ENCODE measurements at regions of chr16 and their contacts with region 1.

Region 1: DNA sequence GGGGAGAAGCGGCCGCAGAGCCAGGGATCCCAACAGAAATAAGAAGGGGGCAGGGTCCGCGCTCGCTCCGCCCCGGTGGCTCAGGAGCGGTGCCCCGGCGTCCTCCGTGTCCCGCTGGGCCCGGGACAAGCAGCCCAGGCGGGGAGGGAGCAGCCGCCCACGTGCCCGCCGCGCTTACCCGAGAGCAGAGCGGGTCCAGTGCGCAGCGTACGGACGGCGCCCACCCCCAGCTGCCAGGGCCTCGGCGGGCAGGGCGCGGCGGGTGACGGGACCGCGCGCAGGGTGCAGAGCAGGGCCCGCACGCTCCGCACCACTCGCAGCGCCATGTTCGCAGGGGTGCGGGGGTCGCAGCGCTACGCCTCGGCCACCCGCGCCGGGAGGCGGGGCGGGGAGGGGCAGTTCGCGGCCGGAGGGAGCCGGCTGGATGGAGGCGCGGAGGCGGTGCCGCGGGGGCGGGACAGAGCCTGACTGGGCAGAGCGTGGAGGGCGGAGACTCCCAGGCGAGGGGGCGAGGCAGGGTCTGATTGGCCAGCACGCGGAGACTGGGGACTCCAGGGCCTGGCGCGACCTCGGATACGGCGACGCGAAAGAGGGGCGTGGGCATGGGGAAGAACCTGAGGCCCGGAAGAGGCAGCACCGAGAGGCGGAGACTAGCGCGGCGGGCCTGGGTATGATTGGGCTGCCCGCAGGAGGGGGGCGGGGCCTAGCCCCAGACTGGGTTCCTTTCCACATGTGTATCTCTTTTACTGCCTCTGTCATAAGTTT is at the start of gene GCSH:
- DNase-seq: peak; percentile 99 to 100
- H3K4me3 ChIP-seq: peak within 1 kb of the TSS; percentile 69 to 94
- H3K27ac ChIP-seq: peak within 1 kb of the TSS; percentile 82 to 84
- H3K4me1 ChIP-seq: peaks cover 0 to 13% (median 3%) of the 10 kb centered on the region in 4 donors
- H3K27me3 ChIP-seq: no peaks in the 10 kb centered on the region
- CTCF ChIP-seq: no peak

Region 2: DNA sequence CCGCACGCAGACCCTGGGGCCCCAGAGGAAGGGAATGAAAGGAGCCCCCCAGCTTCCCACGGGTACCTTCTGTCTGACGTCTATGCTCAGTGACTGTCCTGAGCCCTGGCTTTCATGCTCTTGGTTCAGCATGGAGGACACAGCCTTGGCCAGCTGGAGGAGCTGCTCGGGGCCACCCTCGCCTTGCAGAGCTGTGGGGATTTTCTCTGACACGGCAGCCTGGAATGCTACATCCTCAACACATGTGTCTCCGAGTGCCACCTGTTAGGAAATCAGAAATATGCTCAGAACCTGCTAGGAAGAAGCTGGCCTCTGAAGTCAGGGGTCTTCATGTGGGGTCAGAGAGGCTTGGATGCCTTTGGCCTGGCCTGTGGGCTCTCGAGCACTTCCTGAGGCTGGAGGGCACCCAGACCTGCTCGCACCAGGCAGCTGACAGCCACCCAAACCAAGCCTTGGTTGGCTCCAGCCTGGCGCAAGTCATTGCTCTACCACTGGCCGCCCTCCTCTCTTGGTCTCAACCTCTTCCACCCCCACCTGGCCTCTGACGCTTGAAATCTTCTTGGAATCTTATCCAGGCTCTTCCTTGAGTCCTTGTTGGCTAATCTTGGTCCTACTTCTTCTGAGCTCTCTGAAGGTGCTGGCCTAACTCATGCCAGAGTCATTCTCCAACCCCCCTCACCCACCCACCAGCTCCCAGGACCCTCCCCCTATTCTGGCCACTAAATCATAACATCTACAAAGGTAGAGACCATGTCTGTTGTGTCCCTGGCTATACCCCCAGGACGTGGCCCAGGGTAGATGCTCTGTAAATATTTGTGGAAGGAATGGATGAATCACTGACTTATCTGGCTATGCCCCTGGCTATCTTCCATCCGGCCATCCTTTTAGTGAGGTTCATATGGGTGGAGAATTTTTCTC is 78.8 kb after region 1 on chr16:
- intact Hi-C with region 1: loop called (anchors 5 kb)
- DNase-seq: no peak
- H3K4me3 ChIP-seq: no peak overlapping the region
- H3K27ac ChIP-seq: no peak overlapping the region
- H3K4me1 ChIP-seq: peaks cover 0 to 8% (median 2%) of the 10 kb centered on the region in 4 donors
- H3K27me3 ChIP-seq: no peaks in the 10 kb centered on the region
- CTCF ChIP-seq: no peak

Region 3: DNA sequence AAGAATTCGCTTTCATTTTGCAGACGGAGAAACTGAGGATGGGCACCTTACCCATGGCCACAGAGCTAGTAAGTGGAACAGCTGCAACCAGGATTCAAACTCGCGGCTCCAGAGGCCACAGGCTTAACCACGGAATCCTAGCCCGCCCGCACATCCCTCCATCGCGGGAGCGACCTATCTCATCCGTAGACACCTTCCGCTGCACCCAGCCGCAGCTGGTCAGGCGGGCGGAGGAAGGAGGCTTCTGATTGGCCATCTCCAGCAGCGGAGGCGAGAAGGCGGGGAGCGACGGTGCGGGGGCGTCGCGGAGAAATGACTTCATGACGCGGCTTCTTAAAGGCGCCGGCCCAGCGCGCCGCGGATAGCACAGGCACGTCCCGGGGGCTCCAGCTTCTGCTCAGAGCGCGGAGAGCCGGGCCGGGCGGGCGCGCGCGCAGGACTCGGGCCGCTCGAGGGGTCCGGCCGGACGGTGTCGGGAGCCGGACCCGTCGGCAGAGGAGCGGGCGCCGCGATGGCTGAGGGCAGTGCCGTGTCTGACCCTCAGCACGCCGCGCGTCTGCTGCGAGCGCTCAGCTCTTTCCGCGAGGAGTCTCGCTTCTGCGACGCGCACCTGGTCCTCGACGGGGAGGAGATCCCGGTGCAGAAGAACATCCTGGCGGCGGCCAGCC is 218.6 kb after region 1 on chr16 and contains the start of gene GAN:
- intact Hi-C with region 1: loop called (anchors 10 kb)
- DNase-seq: peak; percentile 95 to 96
- H3K4me3 ChIP-seq: peak within 1 kb of the TSS; percentile 87 to 96
- H3K27ac ChIP-seq: peak within 1 kb of the TSS; percentile 89
- H3K4me1 ChIP-seq: peaks cover 0 to 28% (median 20%) of the 10 kb centered on the region in 4 donors
- H3K27me3 ChIP-seq: no peaks in the 10 kb centered on the region
- CTCF ChIP-seq: no peak

Measured in tibial artery (tissue), 4 donors.